ENCODE measurements at regions of chr6 and their contacts with region 1.

Region 1: GRCh38 chr6:10521104-10521808 is at the start of gene GCNT2:
- DNase-seq: peak; percentile 85 to 90
- H3K4me3 ChIP-seq: peak within 1 kb of the TSS; percentile 33
- H3K4me3 Mint-ChIP-seq: peak within 1 kb of the TSS; percentile 85
- H3K27ac Mint-ChIP-seq: peak within 1 kb of the TSS; percentile 90
- H3K4me1 ChIP-seq: peaks cover 33% of the 10 kb centered on the region
- H3K4me1 Mint-ChIP-seq: peaks cover 27% of the 10 kb centered on the region
- H3K27me3 ChIP-seq: no peaks in the 10 kb centered on the region
- H3K27me3 Mint-ChIP-seq: no peaks in the 10 kb centered on the region
- CTCF ChIP-seq: no peak
- total RNA-seq, gene GCNT2: 68.1 and 70.7 TPM in 2 replicates

Region 2: DNA sequence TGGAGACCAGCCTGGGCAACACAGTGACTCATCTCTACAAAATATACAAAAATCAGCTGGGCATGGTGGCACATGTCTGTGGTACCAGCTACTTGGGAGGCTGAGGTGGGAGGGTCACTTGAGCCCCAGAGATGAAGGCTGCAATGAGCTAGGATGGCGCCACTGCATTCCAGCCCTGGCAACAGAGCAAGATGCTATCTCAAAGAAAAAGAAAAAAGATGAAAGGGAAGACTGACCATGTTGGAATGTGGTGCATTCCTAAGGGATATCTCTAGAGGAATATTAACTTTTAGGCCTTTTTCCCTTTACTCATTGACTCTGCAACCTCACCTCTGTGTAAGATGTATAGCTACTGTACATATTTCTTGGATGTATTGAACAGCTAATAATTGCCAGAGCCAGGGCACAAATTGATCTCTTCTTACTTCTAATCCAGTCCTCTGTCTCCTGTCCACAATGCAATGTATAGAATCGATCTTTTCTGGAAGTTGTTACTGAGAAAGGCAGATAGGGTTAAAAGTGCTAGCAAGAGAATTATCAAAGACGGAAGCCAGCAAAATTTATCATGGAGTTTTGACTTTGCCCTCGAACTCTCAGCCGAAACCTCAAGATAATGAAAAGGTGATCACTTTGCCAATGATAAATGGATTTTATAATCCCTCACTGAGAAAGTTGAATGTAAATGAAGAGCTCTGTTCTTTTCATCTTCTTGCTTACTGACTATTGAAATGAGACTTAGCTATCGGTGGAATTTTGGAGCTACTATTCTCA is 46.2 kb after region 1 on chr6:
- CTCF ChIA-PET with region 1: no interaction called
- POLR2A ChIA-PET with region 1: interaction called, 9 read pairs
- intact Hi-C with region 1: loop called (anchors 1 kb)
- DNase-seq: peak; percentile 78 to 85
- H3K4me3 ChIP-seq: no peak overlapping the region
- H3K4me3 Mint-ChIP-seq: peak overlapping the region; percentile 54
- H3K27ac Mint-ChIP-seq: peak overlapping the region; percentile 88
- H3K4me1 ChIP-seq: peaks cover 56% of the 10 kb centered on the region
- H3K4me1 Mint-ChIP-seq: peaks cover 55% of the 10 kb centered on the region
- H3K27me3 ChIP-seq: no peaks in the 10 kb centered on the region
- H3K27me3 Mint-ChIP-seq: no peaks in the 10 kb centered on the region
- CTCF ChIP-seq: no peak

Region 3: GRCh38 chr6:11637266-11637665 is 1116.0 kb after region 1 on chr6:
- CTCF ChIA-PET with region 1: no interaction called
- POLR2A ChIA-PET with region 1: no interaction called
- intact Hi-C with region 1: no loop called
- DNase-seq: no peak
- H3K4me3 ChIP-seq: no peak overlapping the region
- H3K4me3 Mint-ChIP-seq: no peak overlapping the region
- H3K27ac Mint-ChIP-seq: no peak overlapping the region
- H3K4me1 ChIP-seq: peaks cover 11% of the 10 kb centered on the region
- H3K4me1 Mint-ChIP-seq: peaks cover 8% of the 10 kb centered on the region
- H3K27me3 ChIP-seq: no peaks in the 10 kb centered on the region
- H3K27me3 Mint-ChIP-seq: no peaks in the 10 kb centered on the region
- CTCF ChIP-seq: no peak

Measured in Caco-2 (cell line).